ENCODE measurements at regions of chr7 and their contacts with region 1.

Region 1: GRCh38 chr7:117124585-117125220 is 171.4 kb downstream of the ST7 start:
- DNase-seq: peak in 3 of 4 donors; percentile 33 to 86 (median 63)
- ATAC-seq: peak; percentile 92
- H3K4me3 ChIP-seq: no peak overlapping the region
- H3K27ac ChIP-seq: peak overlapping the region in 1 of 2 donors; percentile 33
- H3K4me1 ChIP-seq: peaks cover 0 to 22% of the 10 kb centered on the region in 2 donors
- H3K27me3 ChIP-seq: no peaks in the 10 kb centered on the region
- CTCF ChIP-seq: no peak

Region 2: GRCh38 chr7:116984917-116985316 is 139.8 kb before region 1 on chr7:
- intact Hi-C with region 1: loop called in 1 of 2 experiments (anchors 5 kb)
- DNase-seq: peak in 1 of 4 donors; percentile 35
- ATAC-seq: peak; percentile 78
- H3K4me3 ChIP-seq: no peak overlapping the region
- H3K27ac ChIP-seq: no peak overlapping the region
- H3K4me1 ChIP-seq: peaks cover 0 to 12% of the 10 kb centered on the region in 2 donors
- H3K27me3 ChIP-seq: no peaks in the 10 kb centered on the region
- CTCF ChIP-seq: peak; percentile 60 to 70

Measured in left lung (tissue), 14 donors.